ENCODE measurements at regions of chr19 and their contacts with region 1.

Region 1: GRCh38 chr19:23249911-23250649 is at the start of gene ZNF724:
- DNase-seq: peak; percentile 77
- ATAC-seq: peak; percentile 100
- H3K4me3 Mint-ChIP-seq: peak within 1 kb of the TSS; percentile 98
- H3K27ac Mint-ChIP-seq: peak within 1 kb of the TSS; percentile 88
- H3K4me1 Mint-ChIP-seq: peaks cover 10% of the 10 kb centered on the region
- H3K27me3 Mint-ChIP-seq: no peaks in the 10 kb centered on the region
- CTCF ChIP-seq: no peak
- total RNA-seq, gene ZNF724: 4.5 and 8.0 TPM in 2 replicates

Region 2: DNA sequence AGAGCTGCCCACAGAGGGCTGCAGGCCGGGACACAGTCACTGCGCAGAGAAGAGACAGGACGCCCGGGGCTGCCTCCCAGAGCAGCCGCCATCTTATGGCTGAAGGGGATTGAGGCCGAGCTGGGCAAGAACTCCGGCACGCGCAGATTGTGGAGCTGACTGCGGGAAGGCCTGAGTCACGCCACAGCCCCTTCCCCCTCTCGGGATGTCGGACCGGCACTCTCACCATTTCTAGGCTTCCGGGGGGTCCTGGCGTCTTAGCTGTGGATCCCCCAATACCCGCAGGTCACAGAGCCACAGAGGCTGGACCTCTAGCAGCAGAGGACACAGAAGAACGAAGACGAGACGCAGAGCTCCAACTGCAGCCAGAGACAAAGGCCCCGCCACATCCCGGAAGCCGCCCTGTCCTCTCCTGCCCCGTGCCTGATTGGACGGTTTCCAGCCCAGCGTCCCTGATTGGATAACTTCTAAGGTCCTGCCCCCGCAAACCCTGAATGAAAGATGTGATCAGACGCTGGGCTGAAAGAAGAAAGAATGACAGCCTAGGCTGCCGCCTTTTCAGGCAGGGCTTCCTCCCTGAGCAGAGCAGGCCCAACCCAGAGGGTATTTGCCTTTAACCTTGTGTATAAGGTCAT is 1414.2 kb before region 1 on chr19 and contains the start of gene ZNF43:
- CTCF ChIA-PET with region 1: no interaction called
- POLR2A ChIA-PET with region 1: no interaction called
- intact Hi-C with region 1: loop called (anchors 1 kb)
- DNase-seq: peak; percentile 77
- ATAC-seq: peak; percentile 98
- H3K4me3 Mint-ChIP-seq: peak within 1 kb of the TSS; percentile 100
- H3K27ac Mint-ChIP-seq: peak within 1 kb of the TSS; percentile 100
- H3K4me1 Mint-ChIP-seq: peaks cover 38% of the 10 kb centered on the region
- H3K27me3 Mint-ChIP-seq: no peaks in the 10 kb centered on the region
- CTCF ChIP-seq: no peak
- total RNA-seq, gene ZNF43: 41.8 and 52.4 TPM in 2 replicates

Region 3: GRCh38 chr19:23116802-23117571 is 133.1 kb before region 1 on chr19 and contains the start of gene ZNF730:
- CTCF ChIA-PET with region 1: no interaction called
- POLR2A ChIA-PET with region 1: interaction called, 5 read pairs
- intact Hi-C with region 1: loop called (anchors 1 kb)
- DNase-seq: peak; percentile 55
- ATAC-seq: peak; percentile 99
- H3K4me3 Mint-ChIP-seq: peak within 1 kb of the TSS; percentile 91
- H3K27ac Mint-ChIP-seq: peak within 1 kb of the TSS; percentile 24
- H3K4me1 Mint-ChIP-seq: peaks cover 11% of the 10 kb centered on the region
- H3K27me3 Mint-ChIP-seq: no peaks in the 10 kb centered on the region
- CTCF ChIP-seq: no peak
- total RNA-seq, gene ZNF730: 1.3 and 1.5 TPM in 2 replicates

Region 4: GRCh38 chr19:23273590-23274413 is 23.7 kb after region 1 on chr19:
- CTCF ChIA-PET with region 1: interaction called, 5 read pairs
- POLR2A ChIA-PET with region 1: interaction called, 32 read pairs
- intact Hi-C with region 1: loop called (anchors 1 kb)
- DNase-seq: peak; percentile 89
- ATAC-seq: peak; percentile 98
- H3K4me3 Mint-ChIP-seq: peak overlapping the region; percentile 97
- H3K27ac Mint-ChIP-seq: peak overlapping the region; percentile 90
- H3K4me1 Mint-ChIP-seq: peaks cover 30% of the 10 kb centered on the region
- H3K27me3 Mint-ChIP-seq: no peaks in the 10 kb centered on the region
- CTCF ChIP-seq: no peak

Region 5: DNA sequence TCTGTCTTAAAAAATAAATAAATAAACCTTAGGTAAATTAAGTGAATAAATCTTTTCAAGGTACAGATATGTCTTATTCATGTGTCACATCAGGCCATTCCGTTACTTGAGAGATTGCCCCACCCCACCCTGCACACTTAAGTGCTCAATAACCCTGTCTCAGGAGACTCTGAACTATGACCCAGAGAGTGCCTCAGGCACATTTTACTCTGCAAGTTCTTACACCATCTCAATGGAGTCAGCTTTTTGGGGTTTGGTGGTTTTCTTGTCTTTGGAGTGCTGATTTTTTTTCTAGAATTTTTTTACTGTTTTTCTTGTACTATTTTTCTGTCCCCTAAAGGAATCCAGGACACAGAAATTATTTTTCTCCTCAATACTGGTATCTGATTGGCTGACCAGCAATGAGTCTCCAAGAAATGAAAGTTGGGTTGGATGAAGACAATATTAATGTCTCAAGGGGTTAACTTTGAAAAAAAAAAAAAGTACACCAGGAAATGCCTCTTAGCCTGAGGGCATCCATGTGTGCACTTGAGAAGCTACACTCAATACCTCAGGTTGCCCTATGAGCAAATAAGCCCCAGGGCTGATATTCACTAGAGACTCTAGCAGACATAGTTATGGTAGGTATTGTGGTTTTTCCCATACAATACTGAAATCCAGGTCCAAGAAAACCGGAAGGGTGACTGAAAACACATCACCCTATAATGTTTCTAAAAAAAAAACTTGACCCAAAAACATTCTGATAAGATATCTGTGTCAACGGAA is 259.8 kb after region 1 on chr19:
- CTCF ChIA-PET with region 1: no interaction called
- POLR2A ChIA-PET with region 1: no interaction called
- intact Hi-C with region 1: no loop called
- DNase-seq: no peak
- ATAC-seq: no peak
- H3K4me3 Mint-ChIP-seq: no peak overlapping the region
- H3K27ac Mint-ChIP-seq: no peak overlapping the region
- H3K4me1 Mint-ChIP-seq: no peaks in the 10 kb centered on the region
- H3K27me3 Mint-ChIP-seq: no peaks in the 10 kb centered on the region
- CTCF ChIP-seq: no peak

Region 6: GRCh38 chr19:23914402-23915301 is 664.6 kb after region 1 on chr19 and contains the start of gene ZNF726:
- CTCF ChIA-PET with region 1: no interaction called
- POLR2A ChIA-PET with region 1: no interaction called
- intact Hi-C with region 1: loop called (anchors 10 kb)
- DNase-seq: peak; percentile 67
- ATAC-seq: peak; percentile 97
- H3K4me3 Mint-ChIP-seq: peak within 1 kb of the TSS; percentile 96
- H3K27ac Mint-ChIP-seq: peak within 1 kb of the TSS; percentile 83
- H3K4me1 Mint-ChIP-seq: peaks cover 10% of the 10 kb centered on the region
- H3K27me3 Mint-ChIP-seq: no peaks in the 10 kb centered on the region
- CTCF ChIP-seq: no peak
- total RNA-seq, gene ZNF726: 8.2 and 9.4 TPM in 2 replicates

Region 7: DNA sequence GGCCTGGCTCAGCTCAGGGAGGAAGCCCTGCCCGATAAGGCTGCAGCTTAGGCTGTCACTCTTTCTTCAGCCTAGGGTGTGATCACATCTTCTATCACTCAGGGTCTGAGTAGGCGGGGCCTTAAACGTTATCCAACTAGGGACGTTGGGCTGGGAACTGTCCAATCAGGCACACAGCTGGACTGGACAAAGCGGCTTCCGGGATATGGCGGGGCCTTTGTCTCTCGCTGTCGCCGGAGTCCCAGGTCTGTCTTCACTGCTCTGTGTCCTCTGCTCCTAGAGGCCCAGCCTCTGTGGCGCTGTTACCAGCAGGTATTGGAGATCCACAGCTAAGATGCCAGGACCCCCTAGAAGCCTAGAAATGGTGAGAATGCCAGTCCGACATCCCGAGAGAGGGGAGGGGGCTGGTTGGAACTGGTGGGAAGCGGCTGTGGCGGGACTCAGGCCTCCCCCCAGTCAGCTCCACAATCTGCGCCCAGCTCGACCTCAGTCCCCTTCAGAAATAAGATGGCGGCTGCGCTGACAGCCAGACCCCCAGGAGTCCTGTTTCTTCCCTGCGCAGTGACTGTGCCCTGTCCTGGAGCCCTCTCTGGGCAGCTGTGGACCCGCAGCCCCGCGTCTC is 837.0 kb after region 1 on chr19 and contains the start of gene ZNF254:
- CTCF ChIA-PET with region 1: no interaction called
- POLR2A ChIA-PET with region 1: no interaction called
- intact Hi-C with region 1: loop called (anchors 5 kb)
- DNase-seq: peak; percentile 67
- ATAC-seq: peak; percentile 99
- H3K4me3 Mint-ChIP-seq: peak within 1 kb of the TSS; percentile 98
- H3K27ac Mint-ChIP-seq: peak within 1 kb of the TSS; percentile 97
- H3K4me1 Mint-ChIP-seq: peaks cover 10% of the 10 kb centered on the region
- H3K27me3 Mint-ChIP-seq: no peaks in the 10 kb centered on the region
- CTCF ChIP-seq: no peak
- total RNA-seq, gene ZNF254: 21.5 and 28.8 TPM in 2 replicates